Activated CD8-positive, alpha-beta T cell treated with anti-CD3 and anti-CD28 coated beads, Interleukin-2, amount 10 ng/mL, durations not matched to agents 7 days and 5 days (primary cell): ENCODE measurements at regions of chr16 and their contacts with region 1.

Region 1: DNA sequence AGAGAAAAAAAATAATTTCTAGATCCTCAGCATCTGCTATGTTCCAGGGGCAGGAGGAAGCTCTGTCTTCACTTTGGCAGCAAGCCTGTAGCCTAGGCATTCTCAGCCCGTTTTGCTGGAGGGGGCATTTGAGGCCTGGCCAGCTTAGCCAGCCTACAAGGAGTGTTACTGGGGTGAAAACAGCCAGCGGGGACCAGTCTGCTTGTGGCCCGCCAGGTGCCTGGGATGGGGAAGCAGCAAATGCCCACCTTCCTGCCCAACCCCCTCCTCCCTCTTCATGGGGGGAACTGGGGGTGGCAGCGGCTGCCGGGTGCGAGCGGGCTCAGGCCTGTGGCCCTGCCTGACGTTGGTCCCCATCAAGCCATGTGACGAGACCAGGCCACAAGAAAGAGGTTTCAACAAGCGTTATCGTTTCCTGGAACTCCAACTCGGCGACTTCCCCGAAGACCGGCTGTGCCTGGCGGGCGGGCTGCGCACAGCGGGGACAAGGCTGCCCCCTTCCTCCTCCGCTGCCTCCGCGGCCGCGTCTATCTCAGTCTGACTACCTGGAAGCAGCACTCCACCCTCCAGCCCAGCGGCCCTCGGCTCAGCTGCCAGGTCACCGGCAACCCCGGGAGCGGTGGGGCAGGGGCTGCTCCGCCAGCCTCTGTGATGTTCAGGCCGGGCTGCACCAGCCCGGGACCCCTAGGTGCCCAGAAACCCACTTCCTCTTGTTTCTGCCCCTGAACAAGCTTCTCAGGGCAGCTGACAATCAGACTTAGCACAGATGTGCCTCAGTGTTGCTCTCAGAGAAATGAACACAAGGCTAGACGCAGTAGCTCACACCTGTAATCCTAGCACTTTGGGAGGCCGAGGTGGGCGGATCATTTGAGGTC is 22.9 kb downstream of the SOCS1 start:
- DNase-seq: peak; percentile 97
- ATAC-seq: peak; percentile 90
- H3K4me3 Mint-ChIP-seq: peak overlapping the region; percentile 71
- H3K27ac Mint-ChIP-seq: peak overlapping the region; percentile 98
- H3K4me1 Mint-ChIP-seq: peaks cover 81% of the 10 kb centered on the region
- H3K27me3 Mint-ChIP-seq: no peaks in the 10 kb centered on the region

Region 2: GRCh38 chr16:10878638-10879501 is 354.2 kb before region 1 on chr16:
- CTCF ChIA-PET with region 1: no interaction called
- POLR2A ChIA-PET with region 1: no interaction called
- DNase-seq: peak; percentile 67
- ATAC-seq: peak; percentile 56
- H3K4me3 Mint-ChIP-seq: peak overlapping the region; percentile 96
- H3K27ac Mint-ChIP-seq: peak overlapping the region; percentile 76
- H3K4me1 Mint-ChIP-seq: peaks cover 82% of the 10 kb centered on the region
- H3K27me3 Mint-ChIP-seq: peaks cover 12% of the 10 kb centered on the region

Region 3: DNA sequence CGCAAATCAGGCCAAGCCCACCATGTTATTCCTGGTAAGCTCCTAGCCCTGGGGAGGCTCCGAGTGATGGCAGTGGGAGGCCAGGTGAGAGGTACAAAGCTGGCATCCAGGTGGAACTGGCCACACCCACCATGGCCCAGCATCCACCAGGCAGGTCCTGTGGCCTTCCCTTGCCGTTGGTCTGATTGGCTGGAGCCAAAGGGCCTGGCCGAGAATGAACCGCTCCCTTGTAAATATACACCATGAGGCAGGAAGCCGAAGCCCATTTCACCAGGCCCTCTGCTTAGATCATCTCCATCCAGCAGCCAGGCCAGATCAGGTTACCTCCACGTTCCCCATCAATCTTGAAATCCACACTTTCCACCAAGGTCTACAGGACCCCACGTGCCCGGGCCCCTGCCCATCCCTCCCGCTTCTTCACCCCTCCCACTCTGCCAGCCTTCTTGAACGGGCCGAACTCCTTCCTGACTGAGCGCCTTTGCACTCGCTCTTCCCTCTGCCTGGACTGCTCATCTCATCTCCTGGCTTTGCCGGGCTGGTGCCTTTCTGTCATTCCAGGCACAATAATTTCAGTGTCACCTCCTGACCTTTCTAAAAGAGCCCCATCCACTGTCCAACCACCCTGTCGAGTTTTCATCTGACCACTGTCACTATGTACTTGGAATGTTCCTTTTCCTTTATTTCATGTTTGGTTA is 17.1 kb after region 1 on chr16:
- CTCF ChIA-PET with region 1: interaction called, 56 read pairs
- POLR2A ChIA-PET with region 1: interaction called, 122 read pairs
- DNase-seq: peak; percentile 50
- ATAC-seq: no peak
- H3K4me3 Mint-ChIP-seq: peak overlapping the region; percentile 29
- H3K27ac Mint-ChIP-seq: peak overlapping the region; percentile 64
- H3K4me1 Mint-ChIP-seq: peaks cover 58% of the 10 kb centered on the region
- H3K27me3 Mint-ChIP-seq: no peaks in the 10 kb centered on the region

Region 4: GRCh38 chr16:11470676-11471415 is 237.8 kb after region 1 on chr16:
- CTCF ChIA-PET with region 1: no interaction called
- POLR2A ChIA-PET with region 1: no interaction called
- DNase-seq: no peak
- ATAC-seq: no peak
- H3K4me3 Mint-ChIP-seq: no peak overlapping the region
- H3K27ac Mint-ChIP-seq: peak overlapping the region; percentile 19
- H3K4me1 Mint-ChIP-seq: no peaks in the 10 kb centered on the region
- H3K27me3 Mint-ChIP-seq: no peaks in the 10 kb centered on the region